IMR-90 (cell line): ENCODE measurements at regions of chr1 and their contacts with region 1.

Region 1: GRCh38 chr1:110460253-110461220 is 9.6 kb downstream of the PROK1 start:
- DNase-seq: peak; percentile 77
- ATAC-seq: peak; percentile 84
- H3K4me3 ChIP-seq: no peak overlapping the region
- H3K27ac ChIP-seq: no peak overlapping the region
- H3K4me1 ChIP-seq: peaks cover 20% of the 10 kb centered on the region
- H3K27me3 ChIP-seq: peaks cover 15% of the 10 kb centered on the region
- CTCF ChIP-seq: peak; percentile 99
- POLR2A ChIP-seq: 0 out of 2 replicates have a peak, but pooled peaks have one; percentile 41
- RAD21 ChIP-seq: peak; percentile 100

Region 2: GRCh38 chr1:110034451-110035235 is 425.9 kb before region 1 on chr1 and contains the start of gene STRIP1:
- CTCF ChIA-PET with region 1: interaction called, 7 read pairs
- POLR2A ChIA-PET with region 1: no interaction called
- dilution Hi-C with region 1: no loop called
- in situ Hi-C with region 1: no loop called
- intact Hi-C with region 1: loop called (anchors 5 kb)
- DNase-seq: peak; percentile 98
- ATAC-seq: peak; percentile 90
- H3K4me3 ChIP-seq: peak within 1 kb of the TSS; percentile 67
- H3K27ac ChIP-seq: peak within 1 kb of the TSS; percentile 58
- H3K4me1 ChIP-seq: peaks cover 2% of the 10 kb centered on the region; the same call in 1 of the 2 replicates
- H3K27me3 ChIP-seq: no peaks in the 10 kb centered on the region
- CTCF ChIP-seq: no peak
- POLR2A ChIP-seq: peak; percentile 67
- RAD21 ChIP-seq: no peak
- total RNA-seq, gene STRIP1: 31.4 and 33.5 TPM in 2 replicates

Region 3: DNA sequence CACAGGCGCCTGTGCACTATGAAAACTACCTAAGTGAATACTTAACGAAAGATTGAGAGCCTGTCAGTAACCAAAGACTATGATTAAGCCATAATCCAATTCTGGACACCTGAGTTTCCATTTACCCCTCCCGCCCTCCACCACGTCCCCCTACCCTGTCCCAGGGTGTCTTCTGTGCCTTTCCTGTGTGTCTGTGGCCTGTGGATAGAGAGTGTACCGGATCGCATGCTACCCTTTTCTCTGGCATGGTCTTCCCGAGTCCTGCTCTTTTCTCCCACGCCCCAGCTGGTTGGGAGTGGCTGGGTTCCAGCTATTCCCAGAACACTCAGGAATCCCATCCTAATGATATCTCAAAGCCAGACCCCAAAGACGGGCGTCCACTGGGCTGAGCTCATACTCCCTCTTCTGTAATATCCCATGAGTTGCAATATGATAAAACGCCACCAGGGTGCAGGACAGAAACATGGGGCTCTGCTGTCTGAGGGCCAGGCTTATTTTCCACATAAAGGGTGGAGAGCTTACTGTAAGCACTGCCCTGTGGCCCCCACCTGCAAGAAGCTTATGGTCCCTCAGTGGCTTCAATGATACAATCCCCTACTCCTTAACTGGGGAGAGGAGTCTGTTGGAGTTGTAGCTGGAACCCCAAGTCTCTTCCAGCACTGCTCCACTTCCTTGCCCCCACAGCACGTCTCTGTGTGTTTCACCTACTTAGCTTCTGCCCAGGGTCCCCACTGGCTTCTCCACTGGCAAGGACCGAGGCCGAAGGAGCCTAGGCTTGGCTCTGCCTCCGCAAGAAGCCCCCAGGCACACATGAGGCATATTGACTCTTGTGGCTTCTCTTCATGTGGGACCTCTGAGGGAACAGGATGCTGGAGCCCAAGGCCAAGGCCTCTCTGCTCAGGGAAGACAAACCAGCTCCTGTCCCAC is 372.5 kb before region 1 on chr1:
- CTCF ChIA-PET with region 1: no interaction called
- POLR2A ChIA-PET with region 1: no interaction called
- dilution Hi-C with region 1: no loop called
- in situ Hi-C with region 1: no loop called
- intact Hi-C with region 1: loop called (anchors 1 kb)
- DNase-seq: peak; percentile 56
- ATAC-seq: peak; percentile 89
- H3K4me3 ChIP-seq: no peak overlapping the region
- H3K27ac ChIP-seq: no peak overlapping the region
- H3K4me1 ChIP-seq: no peaks in the 10 kb centered on the region; the same call in none of the 2 replicates
- H3K27me3 ChIP-seq: peaks cover 74% of the 10 kb centered on the region
- CTCF ChIP-seq: peak; percentile 70
- POLR2A ChIP-seq: no peak
- RAD21 ChIP-seq: peak; percentile 60

Region 4: GRCh38 chr1:110203021-110203661 is 257.4 kb before region 1 on chr1:
- CTCF ChIA-PET with region 1: interaction called, 43 read pairs
- POLR2A ChIA-PET with region 1: no interaction called
- dilution Hi-C with region 1: no loop called
- in situ Hi-C with region 1: loop called (anchors 5 kb)
- intact Hi-C with region 1: loop called (anchors 1 kb)
- DNase-seq: peak; percentile 66
- ATAC-seq: peak; percentile 86
- H3K4me3 ChIP-seq: no peak overlapping the region
- H3K27ac ChIP-seq: no peak overlapping the region
- H3K4me1 ChIP-seq: 0 out of 2 replicates have a peak, but pooled peaks cover 1% of the 10 kb centered on the region
- H3K27me3 ChIP-seq: no peaks in the 10 kb centered on the region; the same call in 1 of the 2 replicates
- CTCF ChIP-seq: peak; percentile 85
- POLR2A ChIP-seq: no peak
- RAD21 ChIP-seq: peak; percentile 87

Region 5: DNA sequence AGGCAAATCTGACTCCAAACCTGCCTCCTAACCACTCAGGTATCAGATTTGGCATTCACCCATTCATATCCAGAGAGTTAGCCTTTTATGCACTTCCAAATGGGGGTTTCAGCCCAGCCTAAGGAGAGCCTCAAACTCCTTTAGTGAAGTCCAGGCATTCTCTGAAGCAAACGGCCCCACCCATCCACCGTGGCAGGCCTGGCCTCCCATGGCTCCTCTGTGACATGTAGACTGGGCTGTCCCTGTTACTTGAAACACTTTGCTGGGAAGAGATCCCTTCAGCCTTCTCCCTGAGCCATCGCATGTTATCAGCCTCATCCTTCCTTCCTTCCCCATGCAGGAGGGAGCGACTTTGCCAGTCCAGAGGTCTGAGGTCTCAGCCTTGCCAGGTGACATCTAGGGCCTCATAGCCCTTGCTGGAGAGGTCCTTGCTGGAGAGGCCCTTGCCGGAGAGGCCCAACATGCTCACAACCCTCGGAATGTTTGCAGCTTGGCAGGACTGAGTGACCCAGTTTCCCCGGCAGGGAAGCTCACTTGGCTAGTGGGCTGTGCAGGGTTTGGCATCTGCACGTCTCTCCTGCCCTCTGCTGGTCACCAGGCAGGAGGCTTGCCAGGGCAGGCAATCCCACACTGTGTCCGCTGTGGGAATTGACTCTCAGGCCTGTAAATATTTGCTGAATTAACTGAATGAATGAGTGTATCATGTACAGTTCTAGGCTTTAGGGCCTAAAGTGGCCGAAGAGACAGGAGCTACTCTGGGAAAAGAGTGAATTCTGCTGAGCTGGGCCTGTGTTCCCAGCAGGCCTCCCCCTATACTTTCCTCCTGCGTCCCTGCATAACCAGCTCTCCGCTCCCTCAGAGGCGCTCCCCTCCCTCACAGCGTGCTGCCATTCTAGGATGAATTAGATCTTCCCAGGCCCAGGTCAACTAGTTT is 148.1 kb before region 1 on chr1:
- CTCF ChIA-PET with region 1: interaction called, 16 read pairs
- POLR2A ChIA-PET with region 1: no interaction called
- dilution Hi-C with region 1: no loop called
- in situ Hi-C with region 1: no loop called
- intact Hi-C with region 1: loop called (anchors 1 kb)
- DNase-seq: peak; percentile 81
- ATAC-seq: peak; percentile 80
- H3K4me3 ChIP-seq: no peak overlapping the region
- H3K27ac ChIP-seq: no peak overlapping the region
- H3K4me1 ChIP-seq: peaks cover 12% of the 10 kb centered on the region
- H3K27me3 ChIP-seq: peaks cover 4% of the 10 kb centered on the region; the same call in 1 of the 2 replicates
- CTCF ChIP-seq: peak; percentile 98
- POLR2A ChIP-seq: no peak
- RAD21 ChIP-seq: peak; percentile 99

Region 6: DNA sequence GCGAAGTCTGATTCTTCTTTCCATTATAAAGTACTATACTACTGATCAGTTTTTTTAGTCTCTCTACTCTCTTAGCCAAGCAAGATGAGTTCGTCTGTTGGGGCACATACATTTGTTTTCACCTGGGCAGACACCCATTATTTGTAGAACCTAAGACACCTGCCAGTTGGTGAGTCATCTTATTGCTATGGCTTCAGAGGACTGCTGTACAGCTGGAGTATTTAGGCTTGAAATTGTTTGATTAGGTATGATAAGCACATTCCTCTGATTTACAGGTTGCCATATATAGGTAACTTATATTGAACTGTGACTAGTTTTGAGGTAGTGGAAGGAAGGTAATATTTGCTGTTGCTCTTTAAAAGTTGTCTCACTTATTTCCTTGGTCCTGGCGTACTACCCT is 104.1 kb before region 1 on chr1:
- CTCF ChIA-PET with region 1: no interaction called
- POLR2A ChIA-PET with region 1: no interaction called
- dilution Hi-C with region 1: no loop called
- in situ Hi-C with region 1: no loop called
- intact Hi-C with region 1: no loop called
- DNase-seq: no peak
- ATAC-seq: no peak
- H3K4me3 ChIP-seq: no peak overlapping the region
- H3K27ac ChIP-seq: no peak overlapping the region
- H3K4me1 ChIP-seq: no peaks in the 10 kb centered on the region
- H3K27me3 ChIP-seq: no peaks in the 10 kb centered on the region
- CTCF ChIP-seq: no peak
- POLR2A ChIP-seq: no peak
- RAD21 ChIP-seq: no peak

Region 7: DNA sequence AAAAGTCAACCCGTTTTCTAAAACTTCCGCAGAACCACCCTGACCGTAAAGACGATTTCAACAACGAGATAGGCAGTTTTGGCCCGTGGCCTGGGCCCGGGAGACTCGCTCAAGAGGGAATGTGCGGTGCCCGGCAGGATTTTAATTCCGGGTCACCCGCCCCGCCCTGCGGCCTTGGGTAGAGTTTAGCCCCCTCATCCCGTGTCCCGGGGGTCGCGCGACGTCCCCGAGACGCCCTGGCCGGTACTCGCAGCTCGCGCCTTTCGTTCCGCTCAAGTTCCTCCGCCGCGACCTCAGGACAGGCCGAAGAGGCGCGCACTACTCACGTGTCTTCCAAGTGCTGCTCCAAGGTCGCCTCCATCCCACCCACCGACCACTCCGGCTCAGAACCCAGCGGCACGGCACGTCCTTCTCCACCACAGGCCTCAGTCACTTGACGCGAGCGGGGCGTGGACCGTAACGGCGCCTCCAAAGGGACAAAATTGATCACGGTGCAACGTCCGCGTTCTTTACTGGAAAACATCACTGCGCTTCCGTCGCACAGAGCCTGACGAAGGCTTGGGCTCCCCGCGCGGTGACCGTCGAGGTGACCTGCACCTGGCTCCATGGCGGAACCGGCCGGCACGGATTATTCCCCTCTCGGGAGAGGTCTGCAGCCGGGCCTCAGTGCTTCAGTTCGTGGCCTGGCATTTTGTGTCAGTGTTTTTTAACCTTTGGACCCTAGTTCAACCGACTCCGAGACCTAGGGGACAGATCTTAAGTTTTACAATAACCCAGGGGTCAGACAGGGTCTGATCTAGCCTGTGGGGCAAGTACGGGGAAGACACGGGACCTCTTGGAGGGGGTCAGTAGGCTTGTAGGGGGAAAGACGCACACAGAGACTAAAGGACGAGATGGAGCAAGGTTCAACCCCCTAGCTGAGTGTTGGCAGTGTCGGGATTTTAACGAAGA is 53.0 kb before region 1 on chr1 and contains the start of gene LAMTOR5:
- CTCF ChIA-PET with region 1: interaction called, 29 read pairs
- POLR2A ChIA-PET with region 1: no interaction called
- dilution Hi-C with region 1: no loop called
- in situ Hi-C with region 1: loop called (anchors 5 kb)
- intact Hi-C with region 1: loop called (anchors 1 kb)
- DNase-seq: peak; percentile 92
- ATAC-seq: peak; percentile 97
- H3K4me3 ChIP-seq: peak within 1 kb of the TSS; percentile 61
- H3K27ac ChIP-seq: peak within 1 kb of the TSS; percentile 75
- H3K4me1 ChIP-seq: peaks cover 2% of the 10 kb centered on the region; the same call in 1 of the 2 replicates
- H3K27me3 ChIP-seq: no peaks in the 10 kb centered on the region
- CTCF ChIP-seq: peak; percentile 31
- POLR2A ChIP-seq: peak; percentile 89
- RAD21 ChIP-seq: peak; percentile 45
- total RNA-seq, gene LAMTOR5: 159 and 177 TPM in 2 replicates

Region 8: GRCh38 chr1:110495926-110496600 is 35.5 kb after region 1 on chr1:
- CTCF ChIA-PET with region 1: interaction called, 30 read pairs
- POLR2A ChIA-PET with region 1: no interaction called
- dilution Hi-C with region 1: no loop called
- in situ Hi-C with region 1: no loop called
- intact Hi-C with region 1: loop called (anchors 1 kb)
- DNase-seq: peak; percentile 71
- ATAC-seq: peak; percentile 96
- H3K4me3 ChIP-seq: no peak overlapping the region
- H3K27ac ChIP-seq: no peak overlapping the region
- H3K4me1 ChIP-seq: no peaks in the 10 kb centered on the region
- H3K27me3 ChIP-seq: peaks cover 22% of the 10 kb centered on the region
- CTCF ChIP-seq: peak; percentile 99; the same call in 1 of the 2 replicates
- POLR2A ChIP-seq: no peak
- RAD21 ChIP-seq: peak; percentile 100